ENCODE measurements at regions of chr3 and their contacts with region 1.

Region 1: GRCh38 chr3:77254967-77255831 is 215.3 kb downstream of the ROBO2 start:
- DNase-seq: peak; percentile 19
- ATAC-seq: no peak
- H3K4me3 Mint-ChIP-seq: no peak overlapping the region
- H3K27ac Mint-ChIP-seq: no peak overlapping the region
- H3K4me1 Mint-ChIP-seq: no peaks in the 10 kb centered on the region
- H3K27me3 Mint-ChIP-seq: no peaks in the 10 kb centered on the region
- CTCF ChIP-seq: peak; percentile 47

Region 2: GRCh38 chr3:77038468-77038929 is 216.7 kb before region 1 on chr3:
- CTCF ChIA-PET with region 1: no interaction called
- POLR2A ChIA-PET with region 1: no interaction called
- intact Hi-C with region 1: loop called (anchors 10 kb)
- DNase-seq: peak; percentile 23
- ATAC-seq: peak; percentile 45
- H3K4me3 Mint-ChIP-seq: no peak overlapping the region
- H3K27ac Mint-ChIP-seq: no peak overlapping the region
- H3K4me1 Mint-ChIP-seq: no peaks in the 10 kb centered on the region
- H3K27me3 Mint-ChIP-seq: peaks cover 26% of the 10 kb centered on the region
- CTCF ChIP-seq: no peak

Measured in activated CD8-positive, alpha-beta T cell treated with anti-CD3 and anti-CD28 coated beads for 36 hours (primary cell).